ENCODE measurements at regions of chr1 and their contacts with region 1.

Region 1: DNA sequence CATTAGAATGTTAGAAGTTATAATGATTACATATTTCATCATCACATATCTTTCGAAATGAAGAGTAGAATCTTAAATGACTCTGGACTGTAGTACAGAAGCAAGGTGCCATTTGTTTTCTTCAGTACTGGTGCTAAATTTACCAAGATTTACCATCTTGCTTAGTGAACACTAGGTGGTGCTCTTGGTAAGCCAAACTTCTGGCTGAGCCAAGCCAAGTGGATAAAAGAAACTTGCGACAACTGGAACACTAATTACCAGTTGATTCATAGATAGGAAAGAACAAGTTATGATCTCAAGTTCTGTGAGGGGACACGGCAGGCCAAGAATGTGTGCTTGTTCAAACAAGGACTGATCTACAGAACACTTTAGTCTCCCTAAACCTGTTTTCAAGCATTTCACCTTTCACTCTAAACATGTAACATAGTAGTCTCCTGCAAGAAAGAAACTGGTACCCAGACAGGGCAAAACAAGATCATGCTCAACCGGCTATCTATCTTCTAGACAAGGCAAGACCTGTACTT is 19.8 kb downstream of the SPRTN start:
- DNase-seq: no peak
- ATAC-seq: peak; percentile 82
- H3K4me3 Mint-ChIP-seq: no peak overlapping the region
- H3K27ac Mint-ChIP-seq: no peak overlapping the region
- H3K4me1 Mint-ChIP-seq: peaks cover 10% of the 10 kb centered on the region
- H3K27me3 Mint-ChIP-seq: no peaks in the 10 kb centered on the region
- CTCF ChIP-seq: peak; percentile 29

Region 2: GRCh38 chr1:231550448-231550781 is 192.5 kb after region 1 on chr1:
- CTCF ChIA-PET with region 1: interaction called, 5 read pairs
- POLR2A ChIA-PET with region 1: no interaction called
- intact Hi-C with region 1: loop called (anchors 1 kb)
- DNase-seq: no peak
- ATAC-seq: peak; percentile 57
- H3K4me3 Mint-ChIP-seq: no peak overlapping the region
- H3K27ac Mint-ChIP-seq: no peak overlapping the region
- H3K4me1 Mint-ChIP-seq: no peaks in the 10 kb centered on the region
- H3K27me3 Mint-ChIP-seq: no peaks in the 10 kb centered on the region
- CTCF ChIP-seq: no peak

Region 3: GRCh38 chr1:231590453-231591198 is 232.7 kb after region 1 on chr1:
- CTCF ChIA-PET with region 1: interaction called, 6 read pairs
- POLR2A ChIA-PET with region 1: interaction called, 4 read pairs
- intact Hi-C with region 1: loop called (anchors 1 kb)
- DNase-seq: no peak
- ATAC-seq: no peak
- H3K4me3 Mint-ChIP-seq: no peak overlapping the region
- H3K27ac Mint-ChIP-seq: no peak overlapping the region
- H3K4me1 Mint-ChIP-seq: peaks cover 16% of the 10 kb centered on the region
- H3K27me3 Mint-ChIP-seq: no peaks in the 10 kb centered on the region
- CTCF ChIP-seq: no peak

Region 4: GRCh38 chr1:231603598-231604275 is 245.8 kb after region 1 on chr1:
- CTCF ChIA-PET with region 1: interaction called, 51 read pairs
- POLR2A ChIA-PET with region 1: no interaction called
- intact Hi-C with region 1: loop called (anchors 1 kb)
- DNase-seq: no peak
- ATAC-seq: peak; percentile 77
- H3K4me3 Mint-ChIP-seq: peak overlapping the region; percentile 89
- H3K27ac Mint-ChIP-seq: peak overlapping the region; percentile 69
- H3K4me1 Mint-ChIP-seq: peaks cover 16% of the 10 kb centered on the region
- H3K27me3 Mint-ChIP-seq: peaks cover 4% of the 10 kb centered on the region
- CTCF ChIP-seq: no peak

Measured in activated B cell treated with CpG ODN at 0.5 μM for 24 hours (primary cell).